ENCODE measurements at regions of chr6 and their contacts with region 1.

Region 1: DNA sequence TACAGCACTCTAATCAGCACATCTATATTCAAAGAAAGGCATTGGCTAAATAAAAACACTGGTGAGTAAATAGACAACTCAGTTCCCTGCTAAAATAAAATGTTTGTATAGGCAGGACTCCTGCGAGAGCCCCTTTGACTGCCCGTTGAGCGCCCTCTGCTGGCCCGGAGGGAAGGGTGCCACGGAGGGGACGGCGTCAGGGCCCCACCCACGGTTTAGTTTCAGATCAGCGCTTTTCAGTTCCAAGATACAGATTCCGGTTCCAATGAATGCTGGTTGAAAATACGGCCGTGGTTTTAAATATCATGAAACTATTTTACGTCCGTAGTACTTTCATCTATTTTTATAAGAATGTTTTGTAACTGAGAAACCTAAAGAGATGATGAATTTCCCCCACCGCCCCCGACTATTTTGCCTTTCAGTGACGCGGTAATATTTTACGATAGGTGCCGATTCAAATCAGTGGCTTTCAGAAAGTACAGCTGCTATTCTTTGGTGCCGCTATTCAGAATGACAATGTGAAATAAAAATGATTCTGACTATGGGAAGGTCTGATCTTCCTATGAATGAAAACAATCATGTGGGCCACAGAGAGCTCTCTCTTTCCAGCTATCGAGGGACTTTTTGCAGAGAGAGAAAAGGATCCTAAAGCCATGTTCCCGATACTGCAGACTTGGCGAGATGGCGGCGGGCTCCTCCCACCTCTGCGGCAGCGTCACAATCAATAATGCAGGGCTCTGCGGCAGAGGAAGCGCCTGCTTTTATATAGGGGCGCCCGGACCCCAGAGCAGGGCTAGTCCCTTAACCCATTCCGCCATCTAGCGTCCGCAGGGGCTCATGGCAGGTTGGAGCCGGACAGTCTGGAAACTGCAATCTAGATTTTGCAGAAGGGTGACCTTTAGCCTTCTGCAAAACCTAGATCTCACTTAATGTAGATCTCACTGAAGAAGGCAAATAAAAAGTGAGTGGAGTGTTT is 10.6 kb upstream of the CCN6 start:
- DNase-seq: peak; percentile 88 to 95 (median 89)
- H3K4me3 ChIP-seq: peak overlapping the region; percentile 96 to 99
- H3K4me3 Mint-ChIP-seq: peak overlapping the region; percentile 90 to 99 (median 96)
- H3K27ac ChIP-seq: peak overlapping the region; percentile 96
- H3K27ac Mint-ChIP-seq: peak overlapping the region; percentile 96 to 100 (median 99)
- H3K4me1 ChIP-seq: peaks cover 9% of the 10 kb centered on the region
- H3K4me1 Mint-ChIP-seq: peaks cover 12 to 35% (median 20%) of the 10 kb centered on the region in 4 donors
- H3K27me3 ChIP-seq: no peaks in the 10 kb centered on the region
- H3K27me3 Mint-ChIP-seq: no peaks in the 10 kb centered on the region

Region 2: DNA sequence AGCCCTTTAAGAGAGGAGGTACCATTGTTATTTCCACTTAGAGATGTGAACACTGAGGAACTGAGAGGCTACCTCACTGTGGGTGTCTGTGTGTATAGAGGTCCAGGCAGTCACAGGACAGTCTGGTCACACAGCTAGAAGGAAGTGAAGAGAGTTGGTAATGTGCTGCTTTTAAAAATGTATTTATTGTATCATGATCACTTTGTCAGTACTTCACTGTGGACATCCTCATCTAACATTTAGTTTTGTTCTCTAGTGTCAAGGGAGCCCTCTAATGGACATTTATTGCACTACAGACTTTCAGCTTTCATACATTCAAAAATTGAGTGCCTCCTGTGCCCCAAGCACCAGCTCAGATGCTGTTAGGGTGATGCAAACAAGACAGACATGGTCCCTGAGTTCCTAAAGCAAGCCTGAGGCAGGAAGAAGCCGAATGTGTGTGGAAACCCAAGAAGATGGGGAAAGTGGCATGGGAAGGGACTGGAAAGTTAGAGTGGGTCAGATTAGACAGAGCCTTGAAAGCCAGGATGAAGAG is 833.1 kb before region 1 on chr6:
- CTCF ChIA-PET with region 1: interaction called, 3 read pairs
- POLR2A ChIA-PET with region 1: no interaction called
- intact Hi-C with region 1: loop called (anchors 1 kb)
- DNase-seq: peak in 4 of 5 donors; percentile 49 to 59 (median 50)
- H3K4me3 ChIP-seq: no peak overlapping the region
- H3K4me3 Mint-ChIP-seq: no peak overlapping the region
- H3K27ac ChIP-seq: no peak overlapping the region
- H3K27ac Mint-ChIP-seq: peak overlapping the region in 1 of 7 donors; percentile 15
- H3K4me1 ChIP-seq: no peaks in the 10 kb centered on the region
- H3K4me1 Mint-ChIP-seq: no peaks in the 10 kb centered on the region
- H3K27me3 ChIP-seq: no peaks in the 10 kb centered on the region
- H3K27me3 Mint-ChIP-seq: no peaks in the 10 kb centered on the region

Region 3: GRCh38 chr6:111478749-111479148 is 564.6 kb before region 1 on chr6:
- CTCF ChIA-PET with region 1: interaction called, 11 read pairs
- POLR2A ChIA-PET with region 1: interaction called, 4 read pairs
- intact Hi-C with region 1: no loop called
- DNase-seq: peak; percentile 31 to 54 (median 47)
- H3K4me3 ChIP-seq: no peak overlapping the region
- H3K4me3 Mint-ChIP-seq: peak overlapping the region in 1 of 8 donors; percentile 21
- H3K27ac ChIP-seq: no peak overlapping the region
- H3K27ac Mint-ChIP-seq: peak overlapping the region in 6 of 7 donors; percentile 36 to 86 (median 63)
- H3K4me1 ChIP-seq: peaks cover 29% of the 10 kb centered on the region
- H3K4me1 Mint-ChIP-seq: peaks cover 29 to 41% (median 34%) of the 10 kb centered on the region in 4 donors
- H3K27me3 ChIP-seq: no peaks in the 10 kb centered on the region
- H3K27me3 Mint-ChIP-seq: no peaks in the 10 kb centered on the region

Region 4: GRCh38 chr6:111709615-111710398 is 333.5 kb before region 1 on chr6:
- CTCF ChIA-PET with region 1: interaction called, 81 read pairs
- POLR2A ChIA-PET with region 1: interaction called, 23 read pairs
- intact Hi-C with region 1: loop called (anchors 1 kb)
- DNase-seq: peak; percentile 74 to 79 (median 76)
- H3K4me3 ChIP-seq: no peak overlapping the region
- H3K4me3 Mint-ChIP-seq: peak overlapping the region; percentile 26 to 82 (median 44)
- H3K27ac ChIP-seq: peak overlapping the region; percentile 42
- H3K27ac Mint-ChIP-seq: peak overlapping the region; percentile 91 to 97 (median 95)
- H3K4me1 ChIP-seq: peaks cover 51% of the 10 kb centered on the region
- H3K4me1 Mint-ChIP-seq: peaks cover 40 to 60% (median 48%) of the 10 kb centered on the region in 4 donors
- H3K27me3 ChIP-seq: no peaks in the 10 kb centered on the region
- H3K27me3 Mint-ChIP-seq: no peaks in the 10 kb centered on the region

Region 5: DNA sequence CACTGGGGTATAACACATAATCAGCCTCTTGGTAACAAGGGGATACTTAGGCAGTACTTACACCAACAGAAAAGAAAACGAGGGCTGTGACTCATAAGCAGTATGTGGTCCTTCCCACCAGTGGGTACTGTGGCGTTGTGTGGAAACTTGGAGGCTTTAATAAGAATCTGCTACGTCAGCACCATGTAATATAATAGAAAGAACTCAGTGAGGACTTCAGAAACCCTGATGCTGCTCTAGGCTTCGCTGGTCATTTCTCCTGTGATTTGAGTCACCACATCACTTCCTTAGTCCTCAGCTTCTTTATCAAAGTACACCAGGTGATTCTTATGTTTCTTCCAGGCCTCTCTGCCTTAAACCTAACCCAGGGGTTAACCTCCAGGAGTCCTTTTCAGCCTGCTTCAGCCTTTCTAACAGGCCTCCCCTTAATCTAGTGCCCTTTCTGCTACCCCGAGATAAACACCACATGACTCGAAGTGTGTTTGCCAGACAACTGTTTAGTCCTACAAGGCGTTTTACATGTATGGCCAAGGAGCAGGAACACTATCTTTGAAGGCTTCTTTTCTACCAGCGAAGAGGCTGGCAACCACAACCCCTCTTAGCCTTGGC is 238.6 kb before region 1 on chr6:
- CTCF ChIA-PET with region 1: interaction called, 7 read pairs
- POLR2A ChIA-PET with region 1: no interaction called
- intact Hi-C with region 1: loop called (anchors 1 kb)
- DNase-seq: peak; percentile 70 to 90 (median 74)
- H3K4me3 ChIP-seq: peak overlapping the region in 1 of 2 donors; percentile 15
- H3K4me3 Mint-ChIP-seq: peak overlapping the region; percentile 34 to 86 (median 72)
- H3K27ac ChIP-seq: peak overlapping the region; percentile 77
- H3K27ac Mint-ChIP-seq: peak overlapping the region; percentile 94 to 99 (median 96)
- H3K4me1 ChIP-seq: peaks cover 98% of the 10 kb centered on the region
- H3K4me1 Mint-ChIP-seq: peaks cover 64 to 98% (median 84%) of the 10 kb centered on the region in 4 donors
- H3K27me3 ChIP-seq: no peaks in the 10 kb centered on the region
- H3K27me3 Mint-ChIP-seq: no peaks in the 10 kb centered on the region

Region 6: DNA sequence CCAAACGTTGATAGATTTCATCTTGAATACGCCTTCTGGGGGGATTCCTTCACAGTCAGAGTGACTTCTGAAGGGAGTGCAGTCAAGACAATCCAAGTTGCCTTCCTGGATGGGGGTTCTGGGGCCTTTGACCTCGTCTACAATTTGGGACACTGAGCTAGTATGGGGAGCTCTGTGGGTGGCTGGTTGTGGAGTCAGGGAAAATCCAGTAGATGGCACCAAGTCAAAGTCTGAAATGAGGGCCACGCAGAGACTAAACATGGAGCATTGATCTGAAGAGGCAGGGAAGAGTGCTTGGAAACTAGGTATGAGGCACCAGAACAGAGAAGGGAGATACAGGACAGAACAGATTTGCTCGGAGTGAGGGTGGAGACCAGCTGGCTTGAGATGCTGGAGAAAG is 33.0 kb before region 1 on chr6:
- CTCF ChIA-PET with region 1: interaction called, 619 read pairs
- POLR2A ChIA-PET with region 1: interaction called, 42 read pairs
- intact Hi-C with region 1: loop called (anchors 1 kb)
- DNase-seq: peak in 4 of 5 donors; percentile 33 to 44 (median 38)
- H3K4me3 ChIP-seq: no peak overlapping the region
- H3K4me3 Mint-ChIP-seq: no peak overlapping the region
- H3K27ac ChIP-seq: no peak overlapping the region
- H3K27ac Mint-ChIP-seq: peak overlapping the region in 3 of 7 donors; percentile 0 to 77 (median 8)
- H3K4me1 ChIP-seq: peaks cover 4% of the 10 kb centered on the region
- H3K4me1 Mint-ChIP-seq: peaks cover 2 to 15% (median 5%) of the 10 kb centered on the region in 4 donors
- H3K27me3 ChIP-seq: no peaks in the 10 kb centered on the region
- H3K27me3 Mint-ChIP-seq: no peaks in the 10 kb centered on the region

Region 7: GRCh38 chr6:112163295-112164257 is 120.3 kb after region 1 on chr6:
- CTCF ChIA-PET with region 1: interaction called, 5 read pairs
- POLR2A ChIA-PET with region 1: no interaction called
- intact Hi-C with region 1: loop called (anchors 1 kb)
- DNase-seq: peak; percentile 61 to 69 (median 63)
- H3K4me3 ChIP-seq: no peak overlapping the region
- H3K4me3 Mint-ChIP-seq: peak overlapping the region in 7 of 8 donors; percentile 48 to 86 (median 69)
- H3K27ac ChIP-seq: no peak overlapping the region
- H3K27ac Mint-ChIP-seq: peak overlapping the region in 4 of 7 donors; percentile 44 to 74 (median 63)
- H3K4me1 ChIP-seq: peaks cover 8% of the 10 kb centered on the region
- H3K4me1 Mint-ChIP-seq: peaks cover 4 to 17% (median 14%) of the 10 kb centered on the region in 4 donors
- H3K27me3 ChIP-seq: no peaks in the 10 kb centered on the region
- H3K27me3 Mint-ChIP-seq: peaks cover 41 to 43% of the 10 kb centered on the region in 2 donors

Region 8: DNA sequence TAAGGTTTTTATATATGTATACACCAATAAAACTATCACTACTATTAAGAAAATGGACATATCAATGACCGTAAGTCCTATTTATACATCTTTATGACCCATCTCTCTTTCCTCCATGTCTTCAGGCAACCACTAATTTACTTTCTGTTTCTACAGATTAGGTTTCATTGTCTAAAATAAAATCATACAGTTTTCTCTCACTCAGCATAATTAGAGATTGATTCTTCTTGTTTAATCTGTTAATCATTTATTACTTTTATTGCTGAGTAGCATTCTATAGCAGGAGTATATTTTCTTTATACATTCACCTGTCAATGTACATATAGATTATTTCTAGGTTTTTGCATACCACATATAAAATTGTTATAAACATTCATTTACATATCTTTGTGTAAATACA is 691.8 kb after region 1 on chr6:
- CTCF ChIA-PET with region 1: no interaction called
- POLR2A ChIA-PET with region 1: no interaction called
- intact Hi-C with region 1: no loop called
- DNase-seq: no peak
- H3K4me3 ChIP-seq: no peak overlapping the region
- H3K4me3 Mint-ChIP-seq: no peak overlapping the region
- H3K27ac ChIP-seq: no peak overlapping the region
- H3K27ac Mint-ChIP-seq: no peak overlapping the region
- H3K4me1 ChIP-seq: no peaks in the 10 kb centered on the region
- H3K4me1 Mint-ChIP-seq: no peaks in the 10 kb centered on the region
- H3K27me3 ChIP-seq: no peaks in the 10 kb centered on the region
- H3K27me3 Mint-ChIP-seq: no peaks in the 10 kb centered on the region

Measured in CD4-positive, alpha-beta memory T cell (primary cell).